ENCODE measurements at regions of chr13 and their contacts with region 1.

Region 1: GRCh38 chr13:23921451-23921888 is 24.2 kb upstream of the C1QTNF9B start:
- DNase-seq: no peak

Region 2: GRCh38 chr13:24012648-24013047 is 91.2 kb after region 1 on chr13:
- intact Hi-C with region 1: loop called (anchors 5 kb)
- DNase-seq: peak in 2 of 10 donors; percentile 53 to 89